Right ventricle myocardium superior (tissue), 1 donor: ENCODE measurements at regions of chr1 and their contacts with region 1.

Region 1: GRCh38 chr1:43067977-43068751 is 103.9 kb downstream of the EBNA1BP2 start:
- DNase-seq: no peak
- ATAC-seq: peak; percentile 50

Region 2: DNA sequence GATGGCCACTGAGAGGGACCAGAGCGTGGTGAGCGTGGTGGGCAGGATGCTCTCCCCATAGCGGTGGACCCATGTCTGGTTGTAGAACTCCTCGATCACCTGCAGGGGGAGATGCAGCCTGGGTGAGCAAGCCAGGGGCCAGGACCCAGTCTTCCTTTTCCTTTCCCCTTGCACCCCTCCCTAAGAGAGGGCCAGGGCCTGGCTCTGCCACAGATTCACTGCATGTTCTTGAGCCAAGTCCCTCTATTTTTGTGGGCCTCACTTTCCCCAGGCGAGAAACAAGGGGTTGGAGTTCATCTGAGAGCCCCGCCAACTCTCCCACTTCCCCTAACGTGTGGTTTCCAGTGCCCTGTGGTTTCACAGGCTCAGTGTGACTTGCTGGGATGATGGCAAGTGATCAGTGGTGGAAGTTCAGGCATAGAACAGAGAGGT is 137.0 kb before region 1 on chr1:
- intact Hi-C with region 1: loop called (anchors 5 kb)
- DNase-seq: no peak
- ATAC-seq: peak; percentile 61

Region 3: DNA sequence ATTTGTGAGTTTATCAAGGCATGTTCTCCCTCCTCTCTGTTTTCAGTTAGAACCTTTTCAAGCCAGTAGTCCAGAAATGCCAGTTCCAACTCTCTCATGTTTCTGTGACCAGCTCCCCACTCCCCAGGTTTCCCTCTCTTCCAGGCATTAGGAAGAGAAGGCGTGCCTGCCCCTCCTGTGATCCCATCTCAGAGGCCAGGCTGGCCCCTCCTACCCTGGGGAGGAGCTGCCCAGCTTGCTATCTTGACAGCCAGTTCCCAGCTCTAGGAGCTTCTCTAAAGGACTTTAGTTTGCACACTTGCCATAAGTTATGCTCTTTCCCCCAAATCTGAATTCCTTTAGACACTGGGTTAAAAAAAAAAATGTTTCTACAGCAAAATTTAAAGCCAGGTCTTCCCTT is 376.7 kb after region 1 on chr1:
- intact Hi-C with region 1: no loop called
- DNase-seq: no peak
- ATAC-seq: peak; percentile 36